ENCODE measurements at regions of chr12 and their contacts with region 1.

Region 1: GRCh38 chr12:103667125-103667524 is 80.1 kb downstream of the STAB2 start:
- DNase-seq: no peak
- H3K4me3 ChIP-seq: no peak overlapping the region
- CTCF ChIP-seq: no peak

Region 2: GRCh38 chr12:103600967-103601728 is 66.0 kb before region 1 on chr12:
- in situ Hi-C with region 1: loop called (anchors 5 kb)
- DNase-seq: no peak
- H3K4me3 ChIP-seq: no peak overlapping the region
- CTCF ChIP-seq: no peak